ENCODE measurements at regions of chr4 and their contacts with region 1.

Region 1: GRCh38 chr4:1579901-1580691 is 104.0 kb downstream of the FAM53A start:
- DNase-seq: peak; percentile 98
- ATAC-seq: peak; percentile 79
- H3K4me3 Mint-ChIP-seq: peak overlapping the region; percentile 60
- H3K27ac Mint-ChIP-seq: no peak overlapping the region
- H3K4me1 Mint-ChIP-seq: peaks cover 4% of the 10 kb centered on the region
- H3K27me3 Mint-ChIP-seq: no peaks in the 10 kb centered on the region

Region 2: GRCh38 chr4:931960-932712 is 648.0 kb before region 1 on chr4 and contains the starts of genes GAK and TMEM175:
- CTCF ChIA-PET with region 1: no interaction called
- POLR2A ChIA-PET with region 1: no interaction called
- intact Hi-C with region 1: loop called in 1 of 2 experiments (anchors 1 kb)
- DNase-seq: peak; percentile 98
- ATAC-seq: peak; percentile 95
- H3K4me3 Mint-ChIP-seq: peak within 1 kb of the TSS; percentile 87
- H3K27ac Mint-ChIP-seq: peak within 1 kb of the TSS; percentile 89
- H3K4me1 Mint-ChIP-seq: peaks cover 29% of the 10 kb centered on the region
- H3K27me3 Mint-ChIP-seq: no peaks in the 10 kb centered on the region
- total RNA-seq, gene GAK: 82.9 to 88.0 TPM
- total RNA-seq, gene TMEM175: 15.2 to 17.3 TPM

Region 3: DNA sequence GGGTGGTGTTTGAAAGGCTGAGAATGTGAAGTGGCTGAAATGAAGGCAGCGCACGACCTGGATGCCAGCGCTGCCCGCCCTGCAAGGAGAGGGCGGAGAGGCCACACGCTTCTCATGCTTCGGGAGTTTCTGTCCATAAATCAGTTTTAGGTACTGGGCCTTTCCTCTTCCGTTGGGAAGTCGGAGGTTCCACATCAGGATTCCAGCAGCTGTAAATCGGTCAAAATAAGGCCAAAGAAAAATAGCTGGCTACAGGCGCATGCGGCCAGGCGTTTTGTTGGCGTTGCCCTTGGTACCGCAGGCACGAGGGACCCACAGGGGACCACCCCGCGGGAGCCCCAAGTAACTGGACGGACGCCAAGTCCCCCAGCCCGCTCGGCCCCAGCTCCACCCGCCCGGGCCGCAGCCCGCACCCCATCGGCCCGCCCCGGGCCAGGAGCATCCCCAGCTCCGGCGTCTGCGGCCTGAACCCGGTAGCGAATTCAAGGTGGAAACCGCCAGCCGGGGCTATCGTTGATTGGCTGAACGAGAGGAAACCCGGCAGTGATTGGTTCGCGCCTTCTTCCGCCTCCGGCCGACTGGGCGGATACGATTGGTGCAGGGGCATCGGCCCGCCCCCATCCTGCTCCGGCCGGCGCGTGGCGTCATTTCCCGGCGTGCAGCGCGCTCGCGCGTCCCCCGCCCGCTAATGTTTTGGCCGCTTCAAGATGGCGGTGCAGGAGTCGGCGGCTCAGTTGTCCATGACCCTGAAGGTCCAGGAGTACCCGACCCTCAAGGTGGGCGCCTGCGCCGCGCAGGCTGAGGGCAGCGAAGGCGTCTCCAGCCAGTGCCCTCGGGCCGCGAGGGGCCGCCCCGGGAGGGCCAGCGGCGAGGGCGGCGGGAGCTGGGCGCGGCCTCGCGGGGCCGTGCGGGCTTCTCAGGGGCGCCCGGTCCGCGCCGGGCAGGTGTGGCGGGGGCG is 290.6 kb before region 1 on chr4 and contains the start of gene MAEA:
- CTCF ChIA-PET with region 1: no interaction called
- POLR2A ChIA-PET with region 1: no interaction called
- intact Hi-C with region 1: loop called in 1 of 2 experiments (anchors 1 kb)
- DNase-seq: peak; percentile 99
- ATAC-seq: peak; percentile 98
- H3K4me3 Mint-ChIP-seq: peak within 1 kb of the TSS; percentile 95
- H3K27ac Mint-ChIP-seq: peak within 1 kb of the TSS; percentile 87
- H3K4me1 Mint-ChIP-seq: peaks cover 41% of the 10 kb centered on the region
- H3K27me3 Mint-ChIP-seq: no peaks in the 10 kb centered on the region
- total RNA-seq, gene MAEA: 38.9 to 40.4 TPM

Region 4: GRCh38 chr4:1712216-1713002 is 132.3 kb after region 1 on chr4 and contains the start of gene SLBP:
- CTCF ChIA-PET with region 1: no interaction called
- POLR2A ChIA-PET with region 1: no interaction called
- intact Hi-C with region 1: loop called in 1 of 2 experiments (anchors 1 kb)
- DNase-seq: peak; percentile 100
- ATAC-seq: peak; percentile 89
- H3K4me3 Mint-ChIP-seq: peak within 1 kb of the TSS; percentile 99
- H3K27ac Mint-ChIP-seq: peak within 1 kb of the TSS; percentile 98
- H3K4me1 Mint-ChIP-seq: peaks cover 58% of the 10 kb centered on the region
- H3K27me3 Mint-ChIP-seq: no peaks in the 10 kb centered on the region
- total RNA-seq, gene SLBP: 113 to 134 TPM

Region 5: GRCh38 chr4:1727117-1728031 is 147.3 kb after region 1 on chr4:
- CTCF ChIA-PET with region 1: no interaction called
- POLR2A ChIA-PET with region 1: no interaction called
- intact Hi-C with region 1: no loop called
- DNase-seq: no peak
- ATAC-seq: no peak
- H3K4me3 Mint-ChIP-seq: no peak overlapping the region
- H3K27ac Mint-ChIP-seq: no peak overlapping the region
- H3K4me1 Mint-ChIP-seq: peaks cover 79% of the 10 kb centered on the region
- H3K27me3 Mint-ChIP-seq: no peaks in the 10 kb centered on the region

Region 6: DNA sequence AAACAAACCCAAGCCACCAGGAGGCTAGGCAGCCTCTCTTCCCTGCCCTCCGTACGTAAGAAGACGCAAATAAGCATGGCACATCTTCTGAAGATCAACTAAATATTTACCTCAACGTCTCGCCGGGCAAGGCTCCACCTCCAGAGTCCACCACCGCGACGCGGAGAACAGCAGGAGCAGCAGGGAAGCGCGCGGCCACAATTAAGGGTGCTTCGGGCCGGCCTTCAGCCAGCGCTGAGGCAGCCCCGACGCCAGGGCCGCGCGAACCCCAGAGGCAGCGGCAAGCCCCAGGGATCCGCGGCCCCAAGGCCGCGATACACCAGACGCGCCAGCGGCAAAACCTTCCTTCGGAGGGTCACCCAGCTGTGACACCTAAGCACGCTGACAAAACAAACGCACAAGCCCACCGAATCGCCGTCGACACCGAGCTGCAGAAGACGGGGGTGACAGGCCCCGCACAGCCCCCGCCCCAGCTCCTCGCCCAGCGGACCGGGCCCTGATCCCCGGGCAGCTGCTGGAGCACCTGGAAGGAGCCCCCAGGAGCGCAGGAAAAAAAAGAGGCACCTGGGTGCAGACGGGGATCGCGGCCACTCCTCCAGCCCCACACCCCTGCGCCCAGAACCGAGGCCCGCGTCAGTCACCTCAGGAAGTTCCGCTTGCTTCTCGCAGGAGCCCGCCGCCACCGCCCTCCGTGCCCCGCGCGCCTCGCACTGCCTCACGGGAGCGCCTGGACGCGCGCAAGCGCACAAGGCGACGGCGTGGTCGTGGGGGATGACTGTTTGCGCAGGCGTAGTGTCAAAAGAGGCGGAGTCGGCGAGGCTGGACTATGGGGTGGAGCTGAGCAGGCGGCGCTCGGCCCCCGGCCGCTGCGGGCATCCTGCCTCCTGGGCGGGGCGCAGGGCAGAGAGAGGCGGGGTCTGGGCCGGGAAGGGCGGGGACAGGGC is 661.6 kb after region 1 on chr4 and contains the starts of genes HAUS3 and POLN:
- CTCF ChIA-PET with region 1: no interaction called
- POLR2A ChIA-PET with region 1: no interaction called
- intact Hi-C with region 1: loop called in 1 of 2 experiments (anchors 2 kb)
- DNase-seq: peak; percentile 99
- ATAC-seq: peak; percentile 97
- H3K4me3 Mint-ChIP-seq: peak within 1 kb of the TSS; percentile 91
- H3K27ac Mint-ChIP-seq: peak within 1 kb of the TSS; percentile 88
- H3K4me1 Mint-ChIP-seq: peaks cover 54% of the 10 kb centered on the region
- H3K27me3 Mint-ChIP-seq: no peaks in the 10 kb centered on the region
- total RNA-seq, gene HAUS3: 14.6 to 18.6 TPM
- total RNA-seq, gene POLN: 2.3 to 3.2 TPM

Region 7: DNA sequence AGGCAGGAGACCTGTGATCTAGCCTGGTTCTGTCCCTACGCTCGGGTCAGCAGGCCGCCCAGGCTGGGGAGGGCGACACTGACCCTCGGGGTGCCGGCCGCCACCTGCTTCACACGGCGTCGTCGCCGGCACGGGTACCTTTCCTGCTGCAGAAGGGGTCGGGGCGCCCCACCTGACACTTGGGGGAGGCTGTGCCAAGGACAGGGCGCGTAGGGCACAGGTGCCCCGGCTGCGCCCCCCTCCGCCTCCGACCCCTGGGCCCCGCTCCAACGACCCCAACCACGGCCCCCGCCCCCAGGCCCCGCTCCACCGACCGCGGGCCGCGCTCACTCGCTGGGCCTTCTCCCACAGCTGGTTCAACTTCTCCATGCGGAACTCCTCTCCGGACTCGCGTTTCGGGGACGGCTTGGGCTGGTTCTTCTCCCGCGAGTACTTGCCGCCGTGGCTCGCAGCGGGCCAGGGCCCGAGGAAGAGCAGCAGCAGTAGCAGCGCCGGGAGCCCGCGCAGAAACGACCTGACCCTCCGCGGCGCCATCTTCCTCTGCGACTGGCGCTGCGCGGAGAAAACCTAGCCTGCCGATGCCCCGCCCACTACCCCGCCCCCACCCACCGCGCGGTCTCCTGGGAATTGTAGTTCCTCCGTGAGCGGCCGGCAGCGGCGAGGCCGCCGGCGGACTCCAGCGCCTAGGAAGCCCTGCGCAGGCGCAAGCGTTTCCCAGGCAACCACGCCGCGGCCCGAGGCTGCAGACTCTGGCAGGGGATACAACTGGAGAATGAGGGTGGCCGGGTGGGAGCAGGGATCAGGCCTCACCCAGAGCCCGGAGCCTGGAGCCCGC is 1952.0 kb after region 1 on chr4 and contains the start of gene LRPAP1:
- CTCF ChIA-PET with region 1: no interaction called
- POLR2A ChIA-PET with region 1: no interaction called
- intact Hi-C with region 1: loop called in 1 of 2 experiments (anchors 2 kb)
- DNase-seq: peak; percentile 92
- ATAC-seq: peak; percentile 94
- H3K4me3 Mint-ChIP-seq: peak within 1 kb of the TSS; percentile 100
- H3K27ac Mint-ChIP-seq: peak within 1 kb of the TSS; percentile 97
- H3K4me1 Mint-ChIP-seq: peaks cover 20% of the 10 kb centered on the region
- H3K27me3 Mint-ChIP-seq: no peaks in the 10 kb centered on the region
- total RNA-seq, gene LRPAP1: 50.8 to 53.4 TPM